Mammary epithelial cell (primary cell): ENCODE measurements at regions of chr1 and their contacts with region 1.

Region 1: DNA sequence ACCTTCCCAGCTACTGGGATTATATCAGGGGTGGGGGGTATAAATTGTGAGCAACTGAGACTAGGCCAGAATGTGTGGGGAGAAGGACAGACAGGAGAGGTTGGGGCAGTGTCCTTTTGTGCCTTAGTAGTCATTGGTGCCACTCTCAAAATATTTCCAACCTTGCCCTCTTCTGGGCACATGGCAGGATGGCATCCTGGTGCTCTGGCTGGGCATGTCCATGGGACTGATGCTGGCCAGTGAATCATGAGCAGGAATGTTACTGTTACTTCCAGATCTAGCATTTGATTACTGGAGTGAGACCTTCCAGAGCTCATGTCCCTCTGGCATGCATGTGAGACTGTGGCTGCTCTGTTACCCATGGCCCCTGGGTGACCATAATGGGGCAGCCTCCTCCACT is 151.2 kb downstream of the MATN1 start:
- DNase-seq: peak; percentile 58
- H3K4me3 ChIP-seq: no peak overlapping the region
- H3K27ac ChIP-seq: no peak overlapping the region
- H3K4me1 ChIP-seq: peaks cover 20% of the 10 kb centered on the region
- H3K27me3 ChIP-seq: no peaks in the 10 kb centered on the region
- CTCF ChIP-seq: peak; percentile 48 to 67

Region 2: DNA sequence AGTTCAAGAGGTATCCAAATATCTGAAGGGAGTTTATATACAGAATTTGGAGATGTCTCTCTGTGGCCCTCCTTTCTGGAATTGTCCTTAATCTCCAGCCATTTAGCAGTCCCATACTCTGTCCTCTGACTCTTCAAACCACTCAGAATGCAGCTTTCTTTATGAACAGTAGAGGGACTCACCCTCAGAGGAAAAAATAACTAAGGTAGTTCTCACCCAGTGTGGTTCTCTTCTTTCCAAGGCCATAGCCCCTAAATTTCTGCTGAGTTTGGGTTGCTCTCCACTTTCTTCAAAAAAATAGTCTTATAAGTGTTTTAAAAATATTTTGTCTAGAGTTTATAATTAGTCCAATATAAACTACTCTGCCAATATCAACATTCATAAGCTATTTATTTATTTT is 218.6 kb before region 1 on chr1:
- CTCF ChIA-PET with region 1: no interaction called
- dilution Hi-C with region 1: no loop called
- in situ Hi-C with region 1: no loop called
- intact Hi-C with region 1: loop called (anchors 2 kb)
- DNase-seq: no peak
- H3K4me3 ChIP-seq: no peak overlapping the region
- H3K27ac ChIP-seq: no peak overlapping the region
- H3K4me1 ChIP-seq: no peaks in the 10 kb centered on the region
- H3K27me3 ChIP-seq: no peaks in the 10 kb centered on the region
- CTCF ChIP-seq: peak; percentile 26 to 68

Region 3: GRCh38 chr1:30407865-30408580 is 164.2 kb before region 1 on chr1:
- CTCF ChIA-PET with region 1: no interaction called
- dilution Hi-C with region 1: no loop called
- in situ Hi-C with region 1: no loop called
- intact Hi-C with region 1: loop called (anchors 1 kb)
- DNase-seq: no peak
- H3K4me3 ChIP-seq: no peak overlapping the region
- H3K27ac ChIP-seq: no peak overlapping the region
- H3K4me1 ChIP-seq: peaks cover 6% of the 10 kb centered on the region
- H3K27me3 ChIP-seq: no peaks in the 10 kb centered on the region
- CTCF ChIP-seq: no peak

Region 4: GRCh38 chr1:30619619-30620018 is 47.4 kb after region 1 on chr1:
- CTCF ChIA-PET with region 1: no interaction called
- dilution Hi-C with region 1: no loop called
- in situ Hi-C with region 1: no loop called
- intact Hi-C with region 1: no loop called
- DNase-seq: no peak
- H3K4me3 ChIP-seq: no peak overlapping the region
- H3K27ac ChIP-seq: no peak overlapping the region
- H3K4me1 ChIP-seq: peaks cover 35% of the 10 kb centered on the region
- H3K27me3 ChIP-seq: no peaks in the 10 kb centered on the region
- CTCF ChIP-seq: no peak

Region 5: DNA sequence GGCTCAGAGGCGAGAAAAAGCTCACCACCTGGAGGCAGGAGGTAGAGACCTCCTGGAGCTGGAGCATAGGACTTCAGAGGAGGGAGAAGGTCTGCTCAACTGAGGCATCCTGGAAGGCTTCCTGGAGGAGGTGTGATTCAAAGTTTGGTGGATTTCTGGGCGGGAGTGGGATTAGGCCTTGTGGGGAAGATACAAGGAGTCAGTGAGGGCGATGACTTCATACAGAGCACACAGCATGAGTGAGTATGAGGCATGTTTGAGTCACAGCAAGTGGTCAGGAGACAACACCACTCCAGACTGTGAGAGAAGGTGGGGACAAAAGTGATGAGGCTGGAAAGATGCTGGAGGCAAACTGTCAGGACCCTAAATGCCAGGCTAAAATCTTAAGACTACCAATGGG is 73.6 kb after region 1 on chr1:
- CTCF ChIA-PET with region 1: no interaction called
- dilution Hi-C with region 1: no loop called
- in situ Hi-C with region 1: no loop called
- intact Hi-C with region 1: loop called (anchors 1 kb)
- DNase-seq: peak; percentile 90
- H3K4me3 ChIP-seq: no peak overlapping the region
- H3K27ac ChIP-seq: no peak overlapping the region
- H3K4me1 ChIP-seq: peaks cover 37% of the 10 kb centered on the region
- H3K27me3 ChIP-seq: no peaks in the 10 kb centered on the region
- CTCF ChIP-seq: no peak